ENCODE measurements at regions of chr16 and their contacts with region 1.

Region 1: DNA sequence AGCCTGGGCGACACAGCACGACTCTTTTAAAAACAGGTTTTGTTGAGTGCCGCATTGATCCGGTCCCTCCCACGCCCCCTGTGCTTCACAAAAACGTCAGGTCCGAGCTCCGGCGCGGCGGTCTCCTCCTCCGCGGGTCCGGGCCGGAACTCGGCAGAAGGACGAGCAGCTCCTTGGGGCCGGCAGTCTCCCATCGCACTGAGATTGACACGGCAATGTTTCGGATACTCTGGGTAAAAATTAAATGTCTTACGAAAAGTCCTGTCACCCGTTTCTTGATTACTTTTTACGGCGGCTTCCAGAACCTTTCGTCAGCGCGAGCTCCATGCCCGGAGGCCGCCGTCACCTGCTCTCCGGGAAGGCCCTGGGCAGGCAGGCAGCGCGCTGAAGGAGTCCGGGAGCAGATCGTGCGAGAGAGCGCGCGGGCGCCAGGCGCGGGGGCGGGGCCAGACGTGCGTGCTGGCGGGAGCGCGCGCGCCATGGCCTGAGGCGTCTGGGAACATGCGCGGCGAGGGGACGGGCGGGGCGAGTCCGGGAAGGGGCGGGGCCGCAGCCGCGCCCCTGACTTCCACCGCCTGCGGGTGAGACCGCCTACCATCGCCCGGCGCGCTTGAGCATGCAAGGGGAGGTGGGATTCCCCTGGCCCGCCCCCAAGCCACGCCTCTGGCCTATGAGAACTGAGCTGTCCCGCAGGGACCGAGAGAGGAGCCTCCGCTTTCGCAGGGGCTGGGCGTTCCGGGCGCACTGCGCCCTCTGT is 11.7 kb upstream of the SRL start:
- DNase-seq: peak; percentile 88
- ATAC-seq: peak; percentile 98
- H3K4me3 ChIP-seq: peak overlapping the region; percentile 56
- H3K27ac ChIP-seq: peak overlapping the region; percentile 82
- H3K4me1 ChIP-seq: no peaks in the 10 kb centered on the region
- H3K27me3 ChIP-seq: no peaks in the 10 kb centered on the region
- CTCF ChIP-seq: no peak
- EP300 ChIP-seq: 0 out of 4 replicates have a peak, but pooled peaks of 1 of the 2 experiments have one; percentile 6
- POLR2A ChIP-seq: peak; percentile 95
- RAD21 ChIP-seq: peak; percentile 80

Region 2: DNA sequence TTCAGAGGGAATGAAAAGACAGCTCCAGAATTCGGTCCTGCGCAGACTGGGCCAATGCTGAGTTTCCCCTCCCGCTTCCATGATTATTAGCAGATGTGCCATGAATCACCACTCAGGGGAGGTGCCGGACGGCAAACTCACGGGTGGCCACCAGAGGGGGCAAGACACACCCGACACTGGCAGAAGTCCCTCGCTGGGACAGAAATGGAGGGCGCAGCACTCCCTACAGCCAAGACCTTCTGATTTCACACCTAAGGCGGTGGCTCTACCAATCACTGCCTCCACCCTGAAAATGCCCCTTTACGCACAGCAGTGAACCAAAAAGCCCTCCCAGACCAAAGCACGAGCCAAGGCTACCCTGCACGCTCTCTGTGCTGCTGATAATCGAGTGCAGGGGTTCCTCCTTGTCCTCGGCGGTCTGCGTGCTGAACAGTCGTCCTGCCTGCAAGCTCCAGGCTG is 563.1 kb before region 1 on chr16:
- CTCF ChIA-PET with region 1: interaction called, 5 read pairs
- POLR2A ChIA-PET with region 1: no interaction called
- RAD21 ChIA-PET with region 1: no interaction called
- SMC1A ChIA-PET with region 1: no interaction called
- in situ Hi-C with region 1: no loop called
- intact Hi-C with region 1: loop called (anchors 5 kb)
- DNase-seq: peak; percentile 21
- ATAC-seq: peak; percentile 100
- H3K4me3 ChIP-seq: no peak overlapping the region
- H3K27ac ChIP-seq: no peak overlapping the region
- H3K4me1 ChIP-seq: peaks cover 5% of the 10 kb centered on the region; the same call in 1 of the 2 replicates
- H3K27me3 ChIP-seq: no peaks in the 10 kb centered on the region
- CTCF ChIP-seq: peak; percentile 88 to 94 (median 91); a peak in 5 of 6 replicates
- EP300 ChIP-seq: no peak
- POLR2A ChIP-seq: no peak
- RAD21 ChIP-seq: peak; percentile 72

Region 3: GRCh38 chr16:3938848-3939624 is 314.5 kb before region 1 on chr16:
- CTCF ChIA-PET with region 1: interaction called, 21 read pairs
- POLR2A ChIA-PET with region 1: no interaction called
- RAD21 ChIA-PET with region 1: interaction called, 3 read pairs
- SMC1A ChIA-PET with region 1: no interaction called
- in situ Hi-C with region 1: no loop called
- intact Hi-C with region 1: loop called (anchors 10 kb)
- DNase-seq: no peak
- ATAC-seq: peak; percentile 93
- H3K4me3 ChIP-seq: no peak overlapping the region
- H3K27ac ChIP-seq: no peak overlapping the region
- H3K4me1 ChIP-seq: no peaks in the 10 kb centered on the region
- H3K27me3 ChIP-seq: no peaks in the 10 kb centered on the region
- CTCF ChIP-seq: peak; percentile 65 to 96 (median 80)
- EP300 ChIP-seq: no peak
- POLR2A ChIP-seq: no peak
- RAD21 ChIP-seq: peak; percentile 60

Region 4: DNA sequence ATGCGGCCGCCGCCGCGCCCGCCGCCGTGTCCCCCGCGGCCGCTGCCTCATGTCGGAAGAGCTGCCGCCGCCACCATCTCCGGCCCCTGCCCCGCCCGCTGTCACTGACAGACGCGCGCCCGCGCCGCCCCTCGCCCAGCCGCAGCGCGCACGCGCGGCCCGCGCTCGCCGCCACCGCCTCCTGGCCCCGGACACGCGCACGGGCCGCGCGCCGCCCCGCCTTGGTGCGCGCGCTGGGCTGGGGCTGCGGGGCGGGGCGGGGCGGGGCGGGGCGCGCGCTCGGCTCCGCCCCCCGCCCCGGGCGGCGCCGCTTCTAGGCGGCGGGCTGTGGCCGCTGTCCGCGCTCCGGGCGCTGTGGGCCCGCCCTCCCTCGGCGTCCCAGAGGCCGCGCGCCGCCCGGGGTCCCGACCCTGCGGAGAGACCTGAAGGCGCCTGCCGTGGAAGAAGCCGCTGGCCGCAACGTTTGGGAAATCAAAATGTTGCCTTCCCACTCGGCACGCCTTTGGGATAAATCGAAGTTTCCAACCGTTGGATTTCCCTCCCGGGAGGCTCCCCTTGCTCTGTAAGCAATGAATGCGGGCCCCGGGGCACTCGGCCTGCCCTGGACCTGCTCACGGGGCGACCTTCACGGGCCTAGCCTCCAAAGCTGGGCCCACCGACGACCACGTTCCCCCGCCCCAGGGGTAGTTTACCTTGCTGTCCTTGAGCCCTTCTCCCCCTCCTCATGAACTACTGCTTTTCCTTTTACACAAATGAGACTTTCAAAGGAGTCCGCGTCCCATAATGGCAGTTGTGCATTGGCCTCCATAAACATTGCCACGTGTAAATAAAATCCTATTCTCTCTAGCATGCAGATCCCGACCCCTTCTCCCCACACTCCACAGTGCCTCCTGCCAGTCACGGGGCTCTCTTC is 137.0 kb before region 1 on chr16 and contains the start of gene ADCY9:
- CTCF ChIA-PET with region 1: interaction called, 7 read pairs
- POLR2A ChIA-PET with region 1: no interaction called
- RAD21 ChIA-PET with region 1: interaction called, 4 read pairs
- SMC1A ChIA-PET with region 1: no interaction called
- in situ Hi-C with region 1: no loop called
- intact Hi-C with region 1: loop called (anchors 5 kb)
- DNase-seq: no peak
- ATAC-seq: peak; percentile 88
- H3K4me3 ChIP-seq: peak within 1 kb of the TSS; percentile 71; the same call in 1 of the 2 replicates
- H3K27ac ChIP-seq: no peak within 1 kb of the TSS
- H3K4me1 ChIP-seq: no peaks in the 10 kb centered on the region
- H3K27me3 ChIP-seq: peaks cover 0 to 4% of the 10 kb centered on the region in 2 experiments; a peak in 1 of 4 replicates
- CTCF ChIP-seq: no peak
- EP300 ChIP-seq: no peak
- POLR2A ChIP-seq: no peak; the same call in 1 of the 2 replicates
- RAD21 ChIP-seq: no peak
- polyA plus RNA-seq, gene ADCY9: not detected

Region 5: DNA sequence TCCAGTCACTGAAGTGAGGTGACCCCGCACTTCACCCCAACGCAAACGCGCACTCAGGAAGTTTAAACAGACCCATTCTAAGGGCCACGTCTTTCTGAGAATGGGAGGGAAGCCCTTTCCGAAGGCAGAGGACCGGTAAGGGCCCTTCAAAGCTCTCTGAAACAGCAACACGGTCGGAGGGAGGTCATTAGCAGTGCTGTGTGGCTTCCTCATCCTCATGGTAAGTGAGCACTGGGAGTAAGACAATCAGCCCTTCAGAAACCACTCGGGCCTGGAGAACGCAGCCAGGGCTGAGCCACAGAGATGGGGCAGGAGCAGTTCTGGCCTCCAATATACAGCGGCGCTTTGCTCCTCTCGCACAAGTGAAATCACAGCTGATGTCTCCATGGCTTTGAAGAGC is 35.4 kb before region 1 on chr16:
- CTCF ChIA-PET with region 1: interaction called, 10 read pairs
- POLR2A ChIA-PET with region 1: interaction called, 3 read pairs
- RAD21 ChIA-PET with region 1: no interaction called
- SMC1A ChIA-PET with region 1: no interaction called
- in situ Hi-C with region 1: no loop called
- intact Hi-C with region 1: no loop called
- DNase-seq: no peak
- ATAC-seq: no peak
- H3K4me3 ChIP-seq: no peak overlapping the region
- H3K27ac ChIP-seq: no peak overlapping the region
- H3K4me1 ChIP-seq: no peaks in the 10 kb centered on the region
- H3K27me3 ChIP-seq: no peaks in the 10 kb centered on the region; a peak in 2 of 4 replicates
- CTCF ChIP-seq: no peak
- EP300 ChIP-seq: no peak
- POLR2A ChIP-seq: no peak
- RAD21 ChIP-seq: no peak

Region 6: GRCh38 chr16:4271176-4272066 is 17.8 kb after region 1 on chr16:
- CTCF ChIA-PET with region 1: interaction called, 42 read pairs
- POLR2A ChIA-PET with region 1: interaction called, 12 read pairs
- RAD21 ChIA-PET with region 1: interaction called, 8 read pairs
- SMC1A ChIA-PET with region 1: interaction called, 6 read pairs
- in situ Hi-C with region 1: no loop called
- intact Hi-C with region 1: no loop called
- DNase-seq: peak; percentile 52
- ATAC-seq: peak; percentile 92
- H3K4me3 ChIP-seq: peak overlapping the region; percentile 91
- H3K27ac ChIP-seq: peak overlapping the region; percentile 84
- H3K4me1 ChIP-seq: no peaks in the 10 kb centered on the region; the same call in 1 of the 2 replicates
- H3K27me3 ChIP-seq: no peaks in the 10 kb centered on the region
- CTCF ChIP-seq: peak; percentile 4 to 23 (median 13); a peak in 1 of 6 replicates
- EP300 ChIP-seq: no peak
- POLR2A ChIP-seq: peak; percentile 76; the same call in 1 of the 2 replicates
- RAD21 ChIP-seq: no peak

Region 7: GRCh38 chr16:4330277-4330874 is 76.8 kb after region 1 on chr16:
- CTCF ChIA-PET with region 1: interaction called, 21 read pairs
- POLR2A ChIA-PET with region 1: no interaction called
- RAD21 ChIA-PET with region 1: interaction called, 21 read pairs
- SMC1A ChIA-PET with region 1: interaction called, 5 read pairs
- in situ Hi-C with region 1: no loop called
- intact Hi-C with region 1: no loop called
- DNase-seq: no peak
- ATAC-seq: peak; percentile 85
- H3K4me3 ChIP-seq: no peak overlapping the region
- H3K27ac ChIP-seq: no peak overlapping the region
- H3K4me1 ChIP-seq: peaks cover 2% of the 10 kb centered on the region
- H3K27me3 ChIP-seq: no peaks in the 10 kb centered on the region
- CTCF ChIP-seq: peak; percentile 94 to 97 (median 95)
- EP300 ChIP-seq: no peak
- POLR2A ChIP-seq: no peak
- RAD21 ChIP-seq: peak; percentile 96

Region 8: GRCh38 chr16:4475880-4476788 is 222.6 kb after region 1 on chr16 and contains the start of gene HMOX2:
- CTCF ChIA-PET with region 1: no interaction called
- POLR2A ChIA-PET with region 1: no interaction called
- RAD21 ChIA-PET with region 1: no interaction called
- SMC1A ChIA-PET with region 1: no interaction called
- in situ Hi-C with region 1: no loop called
- intact Hi-C with region 1: no loop called
- DNase-seq: peak; percentile 90
- ATAC-seq: peak; percentile 90
- H3K4me3 ChIP-seq: peak within 1 kb of the TSS; percentile 98
- H3K27ac ChIP-seq: peak within 1 kb of the TSS; percentile 77
- H3K4me1 ChIP-seq: peaks cover 4% of the 10 kb centered on the region; the same call in 1 of the 2 replicates
- H3K27me3 ChIP-seq: no peaks in the 10 kb centered on the region
- CTCF ChIP-seq: peak; percentile 52 to 63 (median 54); a peak in 5 of 6 replicates
- EP300 ChIP-seq: 0 out of 4 replicates have a peak, but pooled peaks of 1 of the 2 experiments have one; percentile 8
- POLR2A ChIP-seq: peak; percentile 99
- RAD21 ChIP-seq: no peak
- polyA plus RNA-seq, gene HMOX2: 26.4 to 37.7 TPM

Measured in GM12878 (cell line).